CD4-positive, alpha-beta memory T cell (primary cell): ENCODE measurements at regions of chr7 and their contacts with region 1.

Region 1: GRCh38 chr7:65037740-65038678 is 31.5 kb upstream of the ERV3-1 start:
- DNase-seq: peak; percentile 90 to 94 (median 92)
- H3K4me3 ChIP-seq: peak overlapping the region in 1 of 2 donors; percentile 43
- H3K4me3 Mint-ChIP-seq: peak overlapping the region; percentile 68 to 85 (median 81)
- H3K27ac ChIP-seq: peak overlapping the region; percentile 56
- H3K27ac Mint-ChIP-seq: peak overlapping the region; percentile 79 to 93 (median 90)
- H3K4me1 ChIP-seq: peaks cover 14% of the 10 kb centered on the region
- H3K4me1 Mint-ChIP-seq: peaks cover 10 to 17% (median 14%) of the 10 kb centered on the region in 4 donors
- H3K27me3 ChIP-seq: no peaks in the 10 kb centered on the region
- H3K27me3 Mint-ChIP-seq: no peaks in the 10 kb centered on the region

Region 2: DNA sequence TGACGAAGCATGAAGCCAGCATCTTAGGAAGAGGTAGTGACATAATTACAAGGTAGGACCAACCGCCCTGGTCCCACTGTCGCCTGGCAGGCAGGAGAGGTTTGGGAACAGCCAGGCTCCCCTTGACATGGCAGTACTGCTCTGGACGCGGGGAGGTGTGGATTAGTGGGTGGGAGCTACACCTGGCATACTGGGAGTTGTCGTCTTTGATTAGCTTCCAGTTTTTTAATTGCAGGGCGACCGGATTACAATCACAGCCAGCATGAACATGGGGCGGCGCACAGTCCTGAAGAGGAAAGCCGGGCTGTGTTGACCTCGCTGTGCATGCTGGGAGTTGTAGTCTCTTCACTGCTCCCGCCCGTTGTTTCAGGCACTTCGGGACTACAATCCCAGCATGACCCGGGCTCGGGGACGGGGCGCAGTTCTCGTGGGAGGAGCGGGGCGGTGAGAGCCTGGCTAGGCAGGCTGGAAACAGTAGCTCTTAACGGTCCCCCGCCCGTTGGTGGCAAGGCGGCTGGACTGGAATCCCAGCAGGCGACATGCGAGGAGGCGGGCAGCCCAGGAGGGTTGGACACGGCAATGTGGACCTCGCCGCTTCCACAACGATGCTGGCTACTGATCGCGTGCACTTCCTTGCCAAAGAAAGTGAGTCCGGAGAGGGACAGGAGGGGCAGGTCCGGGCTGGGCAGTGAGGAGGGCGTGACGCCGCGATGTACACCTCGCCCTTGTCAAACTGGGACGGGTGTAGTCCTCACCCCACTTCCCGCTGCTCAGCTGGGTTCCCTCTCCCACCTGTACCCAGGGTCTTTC is 1137.4 kb before region 1 on chr7:
- CTCF ChIA-PET with region 1: no interaction called
- POLR2A ChIA-PET with region 1: no interaction called
- intact Hi-C with region 1: loop called (anchors 5 kb)
- DNase-seq: peak; percentile 79 to 94 (median 92)
- H3K4me3 ChIP-seq: peak overlapping the region; percentile 41 to 61
- H3K4me3 Mint-ChIP-seq: peak overlapping the region; percentile 93 to 99 (median 96)
- H3K27ac ChIP-seq: peak overlapping the region; percentile 68
- H3K27ac Mint-ChIP-seq: peak overlapping the region; percentile 82 to 99 (median 98)
- H3K4me1 ChIP-seq: no peaks in the 10 kb centered on the region
- H3K4me1 Mint-ChIP-seq: peaks cover 0 to 20% (median 6%) of the 10 kb centered on the region in 4 donors
- H3K27me3 ChIP-seq: no peaks in the 10 kb centered on the region
- H3K27me3 Mint-ChIP-seq: no peaks in the 10 kb centered on the region

Region 3: GRCh38 chr7:66869660-66870450 is 1831.8 kb after region 1 on chr7:
- CTCF ChIA-PET with region 1: no interaction called
- POLR2A ChIA-PET with region 1: no interaction called
- intact Hi-C with region 1: no loop called
- DNase-seq: no peak
- H3K4me3 ChIP-seq: no peak overlapping the region
- H3K4me3 Mint-ChIP-seq: no peak overlapping the region
- H3K27ac ChIP-seq: no peak overlapping the region
- H3K27ac Mint-ChIP-seq: no peak overlapping the region
- H3K4me1 ChIP-seq: no peaks in the 10 kb centered on the region
- H3K4me1 Mint-ChIP-seq: peaks cover 0 to 4% (median 0%) of the 10 kb centered on the region in 4 donors
- H3K27me3 ChIP-seq: no peaks in the 10 kb centered on the region
- H3K27me3 Mint-ChIP-seq: no peaks in the 10 kb centered on the region